Vagina (tissue), 2 donors: ENCODE measurements at regions of chr15 and their contacts with region 1.

Region 1: DNA sequence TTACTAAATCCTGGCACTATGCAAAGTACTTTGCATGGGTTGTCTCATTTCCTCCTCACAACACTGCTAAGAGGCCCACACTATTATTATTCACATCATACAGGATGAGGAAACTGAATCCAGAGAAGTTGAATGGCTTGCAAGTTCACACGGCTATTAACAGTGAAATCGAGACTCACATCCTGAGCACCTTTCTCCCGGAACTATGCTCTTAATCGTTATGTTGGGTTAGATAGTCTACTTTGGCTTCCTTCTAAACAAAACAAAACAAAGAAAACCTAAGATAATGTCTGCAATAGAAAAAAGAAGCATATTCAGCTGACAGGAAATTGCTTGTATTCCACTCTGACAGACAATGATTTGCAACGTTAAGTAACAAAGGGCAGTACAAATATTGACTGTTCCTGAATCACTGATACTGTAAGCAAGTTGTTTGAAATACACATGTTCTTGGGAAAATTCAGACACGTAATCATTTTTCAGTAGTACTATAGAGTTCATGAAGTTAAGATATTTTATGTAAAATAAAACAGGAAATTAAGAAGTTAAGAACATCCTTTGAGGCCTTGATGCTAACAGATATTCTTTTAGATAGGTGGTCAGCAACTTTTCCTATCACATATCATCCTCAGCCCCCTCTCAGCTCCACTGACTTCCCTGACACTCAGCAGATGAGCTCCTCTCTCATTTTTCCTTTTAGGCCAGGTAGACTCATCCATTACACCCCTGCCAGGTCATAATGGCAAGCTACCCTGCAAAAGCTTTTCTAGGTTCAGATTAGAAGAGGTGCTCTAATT is 40.7 kb downstream of the C2CD4B start:
- DNase-seq: no peak
- H3K4me3 ChIP-seq: no peak overlapping the region
- H3K27ac ChIP-seq: peak overlapping the region; percentile 25
- H3K4me1 ChIP-seq: peaks cover 6% of the 10 kb centered on the region
- H3K27me3 ChIP-seq: no peaks in the 10 kb centered on the region
- CTCF ChIP-seq: no peak
- POLR2A ChIP-seq: no peak

Region 2: DNA sequence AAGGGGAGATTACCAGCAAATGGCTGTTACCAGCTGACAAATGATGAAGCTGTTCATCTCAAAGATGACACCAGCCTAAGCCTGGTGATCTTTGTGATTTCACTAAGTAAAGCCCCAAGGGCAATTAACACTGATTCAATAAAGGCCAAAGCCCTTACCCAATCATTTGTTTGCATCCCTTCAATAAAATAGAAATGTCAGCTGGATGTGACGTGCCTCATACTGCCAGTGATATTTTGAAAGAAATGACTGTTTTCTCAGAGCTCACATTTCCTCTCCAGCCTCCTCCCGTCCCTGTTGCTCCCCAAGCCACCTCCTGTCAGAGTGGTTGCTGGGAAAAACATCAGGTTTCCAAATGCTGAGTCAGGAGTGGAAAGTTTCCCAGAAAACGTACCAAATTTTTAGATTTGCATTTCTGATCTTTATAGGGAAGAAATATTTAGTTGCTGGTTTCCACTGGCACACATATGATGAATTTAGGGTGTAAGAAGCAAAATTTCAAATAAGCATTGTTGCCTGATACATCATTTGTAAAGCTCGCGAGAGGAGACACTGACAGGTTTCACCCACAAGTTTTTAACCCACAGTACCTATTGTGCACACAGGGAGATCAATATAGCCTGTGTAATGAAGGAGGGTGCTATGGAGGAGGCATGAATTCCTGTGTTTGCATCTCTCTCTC is 36.6 kb before region 1 on chr15:
- intact Hi-C with region 1: no loop called
- DNase-seq: no peak
- H3K4me3 ChIP-seq: no peak overlapping the region
- H3K27ac ChIP-seq: no peak overlapping the region
- H3K4me1 ChIP-seq: no peaks in the 10 kb centered on the region
- H3K27me3 ChIP-seq: no peaks in the 10 kb centered on the region
- CTCF ChIP-seq: no peak
- POLR2A ChIP-seq: no peak

Region 3: GRCh38 chr15:62165104-62165792 is 40.9 kb after region 1 on chr15 and contains the start of gene C2CD4B:
- intact Hi-C with region 1: no loop called
- DNase-seq: no peak
- H3K4me3 ChIP-seq: peak within 1 kb of the TSS; percentile 39 to 52
- H3K27ac ChIP-seq: peak within 1 kb of the TSS; percentile 20
- H3K4me1 ChIP-seq: peaks cover 14% of the 10 kb centered on the region
- H3K27me3 ChIP-seq: peaks cover 12% of the 10 kb centered on the region
- CTCF ChIP-seq: no peak
- POLR2A ChIP-seq: peak in 1 of 2 donors; percentile 35
- total RNA-seq, gene C2CD4B: 0.49 TPM

Region 4: DNA sequence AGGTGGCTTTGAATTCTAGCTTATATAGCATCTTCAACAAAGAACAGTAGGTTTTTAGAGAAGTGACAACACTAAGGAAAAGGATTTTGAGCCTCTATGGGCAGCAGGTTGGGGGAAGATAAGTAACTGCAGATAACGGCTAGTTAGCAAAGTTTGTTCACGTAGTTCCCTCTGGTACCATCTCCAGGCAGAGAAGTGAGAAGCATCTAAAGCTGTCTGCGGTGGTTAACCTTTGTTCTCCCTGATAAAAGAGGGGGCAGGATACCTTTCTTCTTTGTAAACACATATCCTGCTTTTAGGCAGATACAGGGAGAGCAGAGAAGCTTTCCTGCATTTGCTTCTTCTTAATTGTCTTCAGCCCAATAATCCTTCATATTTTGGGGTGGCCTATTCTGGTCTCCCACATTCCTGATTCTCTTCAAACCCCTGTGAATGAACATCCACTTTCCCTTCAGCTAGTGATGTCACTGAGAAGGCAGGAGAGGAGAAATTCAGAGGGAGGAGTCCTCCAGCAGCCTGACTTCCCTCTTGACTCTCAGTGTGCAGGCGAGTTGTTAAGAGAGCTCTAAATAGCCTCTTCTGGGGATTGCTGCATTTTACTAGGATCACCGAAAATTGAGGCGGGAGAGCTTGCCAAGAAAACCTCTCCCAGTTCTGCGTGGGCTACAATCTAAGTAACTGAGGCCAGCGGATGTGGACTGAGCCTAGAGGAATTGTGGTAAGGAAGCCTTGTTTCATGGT is 434.4 kb after region 1 on chr15:
- intact Hi-C with region 1: loop called (anchors 5 kb)
- DNase-seq: no peak
- H3K4me3 ChIP-seq: no peak overlapping the region
- H3K27ac ChIP-seq: peak overlapping the region; percentile 51
- H3K4me1 ChIP-seq: peaks cover 20% of the 10 kb centered on the region
- H3K27me3 ChIP-seq: no peaks in the 10 kb centered on the region
- CTCF ChIP-seq: no peak
- POLR2A ChIP-seq: no peak